ENCODE measurements at regions of chr14 and their contacts with region 1.

Region 1: DNA sequence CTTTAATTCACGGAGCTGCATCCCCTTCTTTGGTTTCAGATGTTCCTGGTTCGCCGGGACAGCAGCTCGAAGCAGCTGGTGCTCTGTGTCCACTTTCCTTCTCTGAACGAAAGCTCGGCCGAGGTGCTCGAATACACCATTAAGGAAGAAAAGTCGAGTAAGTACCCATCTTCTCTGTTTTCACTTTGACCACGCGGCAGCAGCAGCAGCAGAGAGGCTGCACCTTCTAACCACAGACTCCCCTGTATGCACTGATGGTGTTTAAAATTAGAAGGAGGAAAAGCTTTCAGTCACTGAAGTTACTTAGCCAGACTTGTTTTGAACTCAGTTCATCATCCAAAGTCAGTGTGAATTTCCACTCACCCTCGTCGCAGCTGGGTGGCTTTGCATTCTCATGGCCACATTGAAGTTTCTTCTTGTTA is 63.8 kb downstream of the RIN3 start:
- DNase-seq: peak; percentile 89
- ATAC-seq: peak; percentile 88
- H3K4me3 ChIP-seq: peak overlapping the region; percentile 59; the same call in 1 of the 2 replicates
- H3K27ac ChIP-seq: peak overlapping the region; percentile 45
- H3K4me1 ChIP-seq: peaks cover 40% of the 10 kb centered on the region
- H3K27me3 ChIP-seq: no peaks in the 10 kb centered on the region
- CTCF ChIP-seq: no peak; a peak in 1 of 6 replicates
- EP300 ChIP-seq: peak; percentile 46 to 73; a peak in 2 of 4 replicates
- POLR2A ChIP-seq: no peak
- RAD21 ChIP-seq: peak; percentile 45

Region 2: DNA sequence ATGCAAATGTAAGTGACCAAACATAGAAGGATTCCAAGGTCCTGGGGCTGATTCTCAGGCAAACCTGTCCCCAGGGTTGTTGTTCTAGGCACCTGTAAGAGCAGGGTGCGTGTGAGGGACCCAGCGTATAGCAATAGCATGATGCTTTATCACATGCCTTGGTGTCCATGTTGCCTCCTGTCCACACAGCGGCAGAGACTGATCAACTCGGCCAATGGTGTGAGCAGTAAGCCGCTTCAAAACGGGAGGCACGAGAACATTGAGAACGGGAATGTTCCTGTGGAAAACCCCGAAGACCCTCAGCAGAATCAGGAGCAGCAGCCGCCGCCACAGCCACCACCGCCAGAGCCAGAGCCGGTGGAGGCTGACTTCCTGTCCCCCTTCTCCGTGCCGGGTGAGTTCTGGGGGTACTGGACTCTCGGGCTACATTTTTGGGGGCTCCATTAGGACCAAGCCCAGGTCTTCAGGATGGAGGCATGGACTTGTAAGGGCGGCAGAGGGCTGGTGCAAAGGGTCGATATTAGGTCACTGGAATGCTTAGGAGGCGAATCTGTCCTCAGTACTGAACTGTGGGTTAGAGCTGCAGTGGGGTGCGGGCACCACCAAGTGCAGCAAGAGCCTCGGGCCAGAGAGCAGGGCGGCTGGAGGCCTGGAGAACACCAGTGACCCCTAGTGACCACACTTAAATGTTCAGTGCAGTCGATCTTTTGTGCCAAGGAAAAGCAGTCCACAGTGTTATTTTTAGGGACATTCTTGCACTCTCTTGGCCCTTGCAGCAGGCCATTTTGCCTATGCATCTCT is 120.9 kb before region 1 on chr14:
- CTCF ChIA-PET with region 1: interaction called, 4 read pairs
- POLR2A ChIA-PET with region 1: interaction called, 6 read pairs
- RAD21 ChIA-PET with region 1: interaction called, 12 read pairs
- SMC1A ChIA-PET with region 1: interaction called, 5 read pairs
- in situ Hi-C with region 1: no loop called
- intact Hi-C with region 1: no loop called
- DNase-seq: no peak
- ATAC-seq: peak; percentile 84
- H3K4me3 ChIP-seq: no peak overlapping the region
- H3K27ac ChIP-seq: no peak overlapping the region
- H3K4me1 ChIP-seq: peaks cover 9% of the 10 kb centered on the region
- H3K27me3 ChIP-seq: no peaks in the 10 kb centered on the region
- CTCF ChIP-seq: peak; percentile 75 to 89 (median 76)
- EP300 ChIP-seq: no peak
- POLR2A ChIP-seq: no peak
- RAD21 ChIP-seq: peak; percentile 75

Region 3: DNA sequence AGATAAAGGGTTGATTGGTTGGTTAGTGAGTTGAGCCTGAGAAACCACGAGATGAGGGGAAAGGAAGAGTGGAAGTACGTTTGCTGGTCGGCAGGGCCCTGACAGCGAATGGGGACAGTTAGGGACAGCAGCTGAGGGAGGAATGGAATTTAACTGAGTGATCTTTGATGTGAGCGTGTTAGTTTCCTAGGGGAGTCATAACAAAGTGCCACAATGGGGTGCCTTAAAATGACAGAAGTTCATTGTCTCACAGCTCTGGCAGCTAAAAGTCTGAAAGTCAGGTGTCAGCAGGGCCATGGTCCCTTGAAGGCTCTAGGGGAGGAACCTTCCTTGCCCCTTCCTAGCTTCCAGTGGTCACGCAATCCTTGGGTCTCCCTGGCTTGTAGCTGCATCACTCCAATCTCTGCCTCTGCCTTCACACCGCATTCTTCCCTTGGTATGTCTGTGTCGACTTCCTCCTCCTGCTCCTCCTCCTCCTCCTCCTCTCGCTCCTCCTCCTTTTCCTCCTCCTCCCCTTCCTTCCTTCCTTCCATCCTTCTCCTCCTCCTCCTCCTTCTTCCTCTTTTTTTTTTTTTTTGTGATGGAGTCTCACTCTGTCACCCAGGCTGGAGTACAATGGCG is 89.7 kb before region 1 on chr14:
- CTCF ChIA-PET with region 1: no interaction called
- POLR2A ChIA-PET with region 1: no interaction called
- RAD21 ChIA-PET with region 1: no interaction called
- SMC1A ChIA-PET with region 1: no interaction called
- in situ Hi-C with region 1: no loop called
- intact Hi-C with region 1: no loop called
- DNase-seq: no peak
- ATAC-seq: no peak
- H3K4me3 ChIP-seq: no peak overlapping the region
- H3K27ac ChIP-seq: no peak overlapping the region
- H3K4me1 ChIP-seq: no peaks in the 10 kb centered on the region
- H3K27me3 ChIP-seq: no peaks in the 10 kb centered on the region; a peak in 3 of 4 replicates
- CTCF ChIP-seq: no peak
- EP300 ChIP-seq: no peak
- POLR2A ChIP-seq: no peak
- RAD21 ChIP-seq: no peak

Region 4: GRCh38 chr14:92538412-92538985 is 38.8 kb before region 1 on chr14:
- CTCF ChIA-PET with region 1: interaction called, 5 read pairs
- POLR2A ChIA-PET with region 1: no interaction called
- RAD21 ChIA-PET with region 1: interaction called, 13 read pairs
- SMC1A ChIA-PET with region 1: interaction called, 5 read pairs
- in situ Hi-C with region 1: no loop called
- intact Hi-C with region 1: no loop called
- DNase-seq: peak; percentile 42
- ATAC-seq: peak; percentile 77
- H3K4me3 ChIP-seq: no peak overlapping the region
- H3K27ac ChIP-seq: no peak overlapping the region; the same call in 1 of the 2 replicates
- H3K4me1 ChIP-seq: peaks cover 28% of the 10 kb centered on the region
- H3K27me3 ChIP-seq: no peaks in the 10 kb centered on the region
- CTCF ChIP-seq: no peak
- EP300 ChIP-seq: no peak
- POLR2A ChIP-seq: no peak
- RAD21 ChIP-seq: no peak

Region 5: GRCh38 chr14:92556255-92556741 is 21.0 kb before region 1 on chr14:
- CTCF ChIA-PET with region 1: interaction called, 10 read pairs
- POLR2A ChIA-PET with region 1: interaction called, 5 read pairs
- RAD21 ChIA-PET with region 1: interaction called, 8 read pairs
- SMC1A ChIA-PET with region 1: interaction called, 15 read pairs
- in situ Hi-C with region 1: no loop called
- intact Hi-C with region 1: no loop called
- DNase-seq: no peak
- ATAC-seq: no peak
- H3K4me3 ChIP-seq: no peak overlapping the region
- H3K27ac ChIP-seq: no peak overlapping the region
- H3K4me1 ChIP-seq: peaks cover 39% of the 10 kb centered on the region
- H3K27me3 ChIP-seq: no peaks in the 10 kb centered on the region
- CTCF ChIP-seq: no peak
- EP300 ChIP-seq: 0 out of 4 replicates have a peak, but pooled peaks of 1 of the 2 experiments have one; percentile 49
- POLR2A ChIP-seq: no peak
- RAD21 ChIP-seq: no peak

Region 6: GRCh38 chr14:92651106-92651757 is 73.9 kb after region 1 on chr14:
- CTCF ChIA-PET with region 1: interaction called, 12 read pairs
- POLR2A ChIA-PET with region 1: interaction called, 3 read pairs
- RAD21 ChIA-PET with region 1: interaction called, 101 read pairs
- SMC1A ChIA-PET with region 1: interaction called, 17 read pairs
- in situ Hi-C with region 1: no loop called
- intact Hi-C with region 1: loop called (anchors 1 kb)
- DNase-seq: peak; percentile 76
- ATAC-seq: peak; percentile 79
- H3K4me3 ChIP-seq: peak overlapping the region; percentile 66; the same call in 1 of the 2 replicates
- H3K27ac ChIP-seq: peak overlapping the region; percentile 89
- H3K4me1 ChIP-seq: peaks cover 33% of the 10 kb centered on the region
- H3K27me3 ChIP-seq: no peaks in the 10 kb centered on the region
- CTCF ChIP-seq: no peak
- EP300 ChIP-seq: peak; percentile 84 to 86; a peak in 3 of 4 replicates
- POLR2A ChIP-seq: peak; percentile 75
- RAD21 ChIP-seq: no peak